AG04450 (cell line): ENCODE measurements at regions of chr3 and their contacts with region 1.

Region 1: GRCh38 chr3:16290007-16290826 is 25.2 kb downstream of the OXNAD1 start:
- DNase-seq: peak; percentile 21
- H3K4me3 ChIP-seq: no peak overlapping the region
- H3K27ac ChIP-seq: no peak overlapping the region
- H3K27me3 ChIP-seq: no peaks in the 10 kb centered on the region
- CTCF ChIP-seq: peak; percentile 84

Region 2: DNA sequence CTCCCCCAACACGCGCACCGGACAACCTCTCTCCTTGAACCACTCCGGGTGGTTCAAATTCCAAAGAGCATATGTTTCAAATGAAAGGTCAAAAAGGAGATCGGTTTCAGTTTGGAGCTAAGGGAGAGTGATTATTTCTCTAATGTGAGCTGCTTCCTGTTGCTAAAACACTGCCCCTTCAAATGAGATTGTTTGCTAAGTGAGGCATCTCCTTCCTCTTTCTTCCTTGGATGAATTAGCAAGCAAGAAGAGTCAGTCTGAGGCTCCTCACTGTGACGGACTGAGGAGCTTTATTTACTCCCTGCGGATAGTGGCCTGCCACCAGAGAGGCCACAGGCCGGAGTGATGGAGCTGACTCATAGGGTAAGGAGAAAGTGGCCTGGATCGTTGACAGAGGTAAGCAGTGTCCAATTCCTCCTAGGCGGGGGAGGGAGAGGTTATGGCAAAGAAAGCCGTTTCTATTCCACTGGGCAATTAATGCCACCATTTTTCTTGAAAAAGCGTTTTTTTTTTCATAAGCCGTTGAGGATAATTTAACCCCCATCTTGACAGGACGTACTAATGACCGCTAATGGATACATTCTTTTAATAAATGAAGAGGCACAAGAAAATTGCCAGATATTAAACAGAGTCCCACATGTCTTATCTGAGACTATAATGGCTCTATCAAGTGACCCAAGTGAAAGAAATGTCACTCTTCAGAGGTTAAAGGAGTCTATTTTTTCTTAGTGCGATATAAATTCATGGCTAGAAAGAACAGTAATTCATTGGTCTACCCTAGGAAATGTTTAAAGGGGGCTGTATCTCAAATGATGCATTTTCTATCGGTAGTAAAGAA is 325.4 kb before region 1 on chr3:
- CTCF ChIA-PET with region 1: no interaction called
- POLR2A ChIA-PET with region 1: no interaction called
- DNase-seq: no peak
- H3K4me3 ChIP-seq: peak overlapping the region; percentile 41
- H3K27ac ChIP-seq: peak overlapping the region; percentile 91
- H3K27me3 ChIP-seq: no peaks in the 10 kb centered on the region
- CTCF ChIP-seq: no peak

Region 3: DNA sequence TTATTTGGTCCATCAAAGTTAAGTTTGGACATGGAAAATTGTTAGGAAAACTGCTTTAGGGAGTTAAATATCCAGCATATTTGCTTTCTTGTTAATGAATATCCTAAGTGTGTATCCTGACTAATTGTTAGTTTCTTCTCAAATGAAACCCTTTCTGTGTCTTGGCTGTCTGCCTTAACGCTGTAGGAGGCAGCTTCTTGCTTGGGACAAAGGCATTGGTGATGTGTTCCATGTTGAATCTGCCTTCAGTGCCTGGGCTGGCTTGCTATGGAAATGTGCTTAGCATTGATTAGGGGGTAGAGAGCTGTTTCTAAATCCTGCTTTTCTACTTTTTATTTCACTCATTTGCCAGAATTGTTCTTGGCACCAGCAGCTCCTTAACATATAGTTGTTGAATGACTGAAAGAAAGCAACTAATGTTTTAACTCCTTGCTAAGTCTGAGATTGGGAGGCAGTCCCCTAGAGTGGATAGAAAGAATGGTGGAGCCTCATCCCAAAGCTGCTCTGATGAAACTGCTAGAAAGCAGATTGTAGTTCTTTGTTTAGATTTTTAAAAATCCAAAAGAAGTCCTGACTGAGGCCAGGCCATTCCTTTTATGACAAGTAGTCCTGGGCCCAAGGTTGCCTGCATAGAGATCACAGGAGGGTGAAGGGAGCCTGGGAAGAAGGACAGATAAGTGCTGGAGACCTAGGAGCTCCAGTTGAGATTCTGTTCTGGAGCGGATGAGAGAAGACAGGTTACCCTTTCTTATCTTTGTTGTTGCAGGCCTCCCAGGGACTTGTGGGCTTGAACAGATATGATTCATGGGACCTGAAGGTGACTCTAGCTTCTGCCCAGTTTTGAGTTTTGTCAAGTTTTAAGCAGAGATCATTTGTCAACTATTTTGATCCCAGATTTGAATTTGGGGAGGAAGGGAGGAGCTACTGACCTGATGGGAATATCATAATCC is 14.1 kb after region 1 on chr3:
- CTCF ChIA-PET with region 1: interaction called, 12 read pairs
- POLR2A ChIA-PET with region 1: no interaction called
- DNase-seq: no peak
- H3K4me3 ChIP-seq: no peak overlapping the region
- H3K27ac ChIP-seq: no peak overlapping the region
- H3K27me3 ChIP-seq: no peaks in the 10 kb centered on the region
- CTCF ChIP-seq: no peak

Region 4: DNA sequence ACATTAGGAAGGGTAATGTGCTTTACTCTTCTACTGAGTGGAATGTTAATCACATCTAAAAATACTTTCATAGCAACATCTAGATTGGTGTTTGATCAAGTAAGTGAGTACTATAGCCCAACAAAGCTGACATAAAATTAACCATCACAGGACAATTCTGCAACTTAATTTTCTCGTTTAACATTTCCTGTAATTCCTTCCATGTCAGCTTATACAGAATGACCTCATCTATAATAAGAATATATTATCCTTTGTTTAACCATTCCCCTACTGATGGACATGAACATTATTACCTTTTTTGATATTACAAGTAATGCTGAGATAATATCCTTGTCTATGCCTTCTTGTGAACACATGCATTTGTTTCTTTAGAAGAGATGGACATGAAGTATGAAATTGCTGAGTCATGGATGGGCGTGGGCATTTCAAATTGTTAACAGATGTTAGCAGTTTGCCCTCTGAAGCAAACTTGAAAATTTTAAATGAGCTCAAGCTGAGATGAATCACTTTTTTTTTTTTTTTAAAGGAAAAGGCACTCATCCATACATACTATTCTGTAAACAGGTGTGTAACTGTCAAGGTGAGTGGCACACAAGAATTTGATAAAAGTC is 59.9 kb after region 1 on chr3:
- CTCF ChIA-PET with region 1: no interaction called
- POLR2A ChIA-PET with region 1: no interaction called
- DNase-seq: peak; percentile 58
- H3K4me3 ChIP-seq: no peak overlapping the region
- H3K27ac ChIP-seq: peak overlapping the region; percentile 75
- H3K27me3 ChIP-seq: no peaks in the 10 kb centered on the region
- CTCF ChIP-seq: no peak

Region 5: GRCh38 chr3:16496408-16497222 is 206.4 kb after region 1 on chr3:
- CTCF ChIA-PET with region 1: interaction called, 10 read pairs
- POLR2A ChIA-PET with region 1: no interaction called
- DNase-seq: no peak
- H3K4me3 ChIP-seq: no peak overlapping the region
- H3K27ac ChIP-seq: no peak overlapping the region
- H3K27me3 ChIP-seq: no peaks in the 10 kb centered on the region
- CTCF ChIP-seq: no peak

Region 6: GRCh38 chr3:16516695-16517481 is 226.7 kb after region 1 on chr3:
- CTCF ChIA-PET with region 1: interaction called, 76 read pairs
- POLR2A ChIA-PET with region 1: interaction called, 3 read pairs
- DNase-seq: peak; percentile 45
- H3K4me3 ChIP-seq: no peak overlapping the region
- H3K27ac ChIP-seq: no peak overlapping the region
- H3K27me3 ChIP-seq: no peaks in the 10 kb centered on the region
- CTCF ChIP-seq: peak; percentile 80

Region 7: DNA sequence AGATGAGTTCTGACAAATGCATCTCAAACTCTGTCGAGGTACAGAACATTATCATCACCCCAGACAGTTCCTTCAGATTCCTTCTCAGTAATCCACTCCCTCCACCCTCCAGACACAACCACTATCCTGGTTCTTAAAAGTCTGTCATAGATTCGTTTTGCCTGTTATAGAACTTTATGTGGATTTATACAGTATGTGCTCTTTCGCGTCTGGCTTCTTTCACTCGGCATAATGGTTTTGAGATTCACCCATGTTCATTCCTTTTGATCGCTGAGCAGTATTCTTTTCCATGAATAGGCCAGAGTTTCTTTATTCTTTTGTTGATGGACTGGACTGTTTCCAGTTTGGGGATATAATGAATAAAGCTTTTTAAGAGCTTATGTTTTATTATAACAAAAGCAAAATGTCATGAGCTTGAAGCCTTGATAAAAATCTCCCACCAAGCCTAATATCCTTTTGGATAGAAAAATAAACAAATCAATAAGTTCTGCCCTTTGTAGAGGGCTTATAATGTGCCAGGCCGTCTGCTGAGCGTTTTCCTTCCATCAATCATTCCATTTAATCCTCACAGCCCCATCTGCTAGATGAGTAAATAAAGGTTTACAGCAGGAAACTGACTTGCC is 244.5 kb after region 1 on chr3:
- CTCF ChIA-PET with region 1: interaction called, 21 read pairs
- POLR2A ChIA-PET with region 1: no interaction called
- DNase-seq: no peak
- H3K4me3 ChIP-seq: no peak overlapping the region
- H3K27ac ChIP-seq: no peak overlapping the region
- H3K27me3 ChIP-seq: peaks cover 38% of the 10 kb centered on the region
- CTCF ChIP-seq: no peak

Region 8: GRCh38 chr3:16550676-16551341 is 260.6 kb after region 1 on chr3:
- CTCF ChIA-PET with region 1: interaction called, 119 read pairs
- POLR2A ChIA-PET with region 1: no interaction called
- DNase-seq: peak; percentile 69
- H3K4me3 ChIP-seq: no peak overlapping the region
- H3K27ac ChIP-seq: no peak overlapping the region
- H3K27me3 ChIP-seq: peaks cover 11% of the 10 kb centered on the region
- CTCF ChIP-seq: peak; percentile 90

Region 9: DNA sequence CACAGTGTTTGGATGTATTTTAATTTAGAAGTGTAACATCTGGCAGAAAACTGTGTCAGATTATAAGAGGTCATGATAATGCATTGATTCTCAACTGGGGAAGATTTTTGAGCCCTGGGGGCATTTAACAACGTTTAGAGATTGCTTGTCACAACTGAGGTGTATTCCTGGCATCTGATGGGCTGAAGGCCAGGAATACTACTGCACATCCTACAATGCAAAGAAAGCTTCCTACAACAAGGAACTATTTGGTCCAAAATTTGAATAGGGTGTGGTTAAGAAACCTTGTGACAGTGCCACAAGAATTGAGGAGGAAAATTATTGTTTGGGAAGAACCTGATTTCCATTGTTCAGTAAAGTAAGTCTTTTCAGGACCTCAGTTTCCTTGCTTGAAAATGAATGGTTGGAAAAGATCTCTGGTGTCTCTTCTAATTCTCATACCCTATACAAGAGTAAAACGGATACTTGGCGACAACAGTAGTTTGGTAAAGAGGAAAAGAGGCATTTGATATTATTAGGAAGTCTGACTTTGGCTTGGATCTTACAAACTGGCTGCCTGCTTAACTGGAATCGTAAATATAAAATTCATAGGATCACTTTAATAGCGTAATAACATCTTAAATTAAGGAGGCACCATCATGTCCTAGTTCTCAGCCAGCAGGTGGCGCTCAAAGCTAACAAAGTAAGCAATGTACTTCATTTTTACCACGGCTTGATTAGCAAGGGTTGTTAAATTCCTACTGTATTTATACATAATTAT is 310.7 kb after region 1 on chr3:
- CTCF ChIA-PET with region 1: interaction called, 32 read pairs
- POLR2A ChIA-PET with region 1: no interaction called
- DNase-seq: peak; percentile 68
- H3K4me3 ChIP-seq: no peak overlapping the region
- H3K27ac ChIP-seq: no peak overlapping the region
- H3K27me3 ChIP-seq: no peaks in the 10 kb centered on the region
- CTCF ChIP-seq: peak; percentile 83